ENCODE measurements at regions of chr2 and their contacts with region 1.

Region 1: GRCh38 chr2:205925373-205926337 is 160.3 kb downstream of the INO80D start:
- DNase-seq: peak; percentile 52 to 96 (median 76)

Region 2: GRCh38 chr2:204145263-204145751 is 1780.3 kb before region 1 on chr2:
- intact Hi-C with region 1: loop called (anchors 10 kb)
- DNase-seq: peak; percentile 43 to 96 (median 76)

Region 3: GRCh38 chr2:204790076-204790475 is 1135.6 kb before region 1 on chr2:
- intact Hi-C with region 1: no loop called
- DNase-seq: no peak

Region 4: DNA sequence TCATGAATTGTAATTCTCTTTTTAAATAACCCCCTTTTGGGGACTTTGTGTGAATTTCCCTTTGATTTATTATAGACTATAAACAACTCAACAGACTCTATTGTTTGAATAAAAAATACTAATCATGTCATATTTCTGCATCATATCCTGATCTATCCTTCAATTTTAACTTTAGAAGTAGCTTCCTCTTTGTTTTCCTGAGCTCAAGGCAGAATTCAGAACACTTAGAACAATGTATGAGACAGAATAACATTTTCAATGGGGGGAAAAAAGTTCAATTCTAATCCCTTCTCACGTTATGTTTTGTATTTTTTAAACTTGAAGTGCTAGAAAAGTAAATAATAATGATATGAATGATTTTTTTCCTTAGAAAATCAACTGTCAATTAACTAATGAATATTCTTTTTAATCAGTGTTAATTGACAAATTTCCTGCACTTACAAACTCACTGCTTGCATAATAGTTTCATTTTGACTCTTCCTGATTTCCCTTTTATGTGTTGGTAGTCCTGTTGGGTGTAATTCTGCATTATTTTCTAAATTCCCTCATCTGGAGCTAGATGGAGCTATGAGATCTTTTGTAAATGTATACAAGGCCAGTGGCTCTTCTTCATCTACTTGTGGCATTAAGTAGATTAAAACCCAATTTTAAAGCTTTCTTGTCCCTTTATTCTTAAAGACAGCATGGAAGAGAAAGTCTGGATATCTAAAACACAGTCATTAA is 1054.3 kb before region 1 on chr2:
- intact Hi-C with region 1: loop called (anchors 5 kb)
- DNase-seq: no peak

Region 5: DNA sequence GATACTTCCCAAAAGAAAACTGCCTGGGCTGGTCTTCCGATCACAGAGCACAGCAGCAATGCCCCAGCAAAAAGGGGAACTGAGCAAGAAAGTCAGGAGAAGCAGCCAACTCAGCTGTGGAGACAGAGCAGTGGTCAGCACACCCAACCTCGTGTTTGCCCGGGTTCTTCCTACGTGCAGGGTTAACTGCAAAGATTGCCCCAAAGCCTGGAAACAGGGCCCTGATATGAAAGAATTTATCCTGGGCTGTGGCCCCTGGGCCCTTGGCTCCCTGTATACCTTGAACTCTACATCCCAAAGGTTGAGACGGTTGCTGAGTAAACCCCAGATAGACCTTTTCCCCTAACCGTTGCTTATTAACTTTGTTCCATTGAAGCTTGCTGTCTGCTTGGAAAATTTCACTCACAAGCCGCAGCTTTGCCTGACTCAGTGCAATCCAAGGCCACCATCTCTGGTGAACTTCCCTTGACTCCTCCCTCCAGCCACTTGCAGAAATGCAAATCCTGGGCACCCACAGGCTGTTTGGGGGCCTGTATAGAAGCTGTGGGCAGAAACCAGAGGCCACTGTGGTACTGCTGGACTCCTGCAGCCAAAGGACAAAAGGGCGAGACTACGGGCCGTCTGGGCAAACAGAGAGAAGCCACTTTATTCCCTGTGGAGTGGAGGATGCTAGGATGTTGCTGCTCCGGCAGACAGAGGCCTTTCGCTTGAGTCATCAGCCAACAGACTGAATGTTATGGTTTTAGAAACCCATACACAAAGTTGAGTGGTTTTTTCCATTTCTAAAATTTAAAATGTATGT is 225.1 kb before region 1 on chr2:
- intact Hi-C with region 1: no loop called
- DNase-seq: peak in 1 of 10 donors; percentile 76

Region 6: DNA sequence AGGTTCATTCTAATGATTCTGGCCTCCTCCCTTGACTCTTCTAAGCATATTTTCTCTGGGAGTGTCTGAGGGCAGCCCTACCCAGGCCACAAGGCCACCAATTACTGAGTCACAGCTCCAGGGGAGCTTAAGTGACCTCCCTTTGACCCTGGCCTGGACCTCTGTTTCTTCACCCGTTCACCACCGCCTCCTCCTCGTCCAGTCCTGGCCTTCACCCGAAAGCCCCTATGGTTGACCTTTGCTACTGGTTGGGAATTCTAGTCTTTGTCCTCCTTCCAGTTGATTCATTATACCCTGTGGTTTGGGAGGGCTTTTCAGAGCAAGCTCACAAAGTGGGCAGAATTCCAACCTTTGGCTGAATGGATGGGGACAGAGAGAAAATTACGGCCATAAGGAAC is 170.7 kb before region 1 on chr2:
- intact Hi-C with region 1: no loop called
- DNase-seq: peak in 1 of 10 donors; percentile 49

Region 7: GRCh38 chr2:205766779-205767359 is 158.8 kb before region 1 on chr2:
- intact Hi-C with region 1: loop called (anchors 1 kb)
- DNase-seq: peak; percentile 16 to 94 (median 68)

Region 8: DNA sequence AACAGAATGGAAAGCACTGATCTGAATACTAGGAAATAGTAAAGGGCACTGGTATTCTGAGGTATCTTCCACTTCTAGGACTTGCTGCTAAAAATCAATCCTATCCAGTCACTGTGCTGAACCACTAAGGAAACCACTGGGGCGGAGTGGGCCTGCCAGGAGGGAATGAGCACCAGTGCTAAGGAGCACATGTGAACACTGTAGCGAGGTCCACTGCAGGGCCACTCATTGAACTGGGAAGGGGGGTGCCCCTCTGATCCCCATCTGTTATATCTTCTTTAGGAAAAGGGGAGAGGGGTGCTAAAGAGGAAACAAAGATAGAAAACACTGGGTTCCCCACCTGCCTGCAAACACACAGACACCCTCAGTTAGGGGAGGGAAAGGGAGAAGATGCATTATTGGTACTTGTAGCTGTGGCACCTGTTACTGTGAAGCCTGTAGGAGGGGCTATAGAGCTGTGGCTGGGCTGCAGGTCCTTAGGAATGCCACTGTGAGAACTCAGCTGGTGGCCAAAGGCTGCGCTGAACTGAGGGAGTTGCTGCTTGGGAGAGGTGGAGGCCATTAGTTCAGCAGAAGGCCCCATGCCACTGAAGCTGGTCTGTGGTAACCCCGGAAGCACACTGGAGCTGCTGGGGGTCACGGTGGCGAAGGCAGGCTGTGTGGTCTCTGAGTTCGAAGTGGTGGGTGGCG is 78.5 kb after region 1 on chr2:
- intact Hi-C with region 1: no loop called
- DNase-seq: no peak